IMR-90 (cell line): ENCODE measurements at regions of chr4 and their contacts with region 1.

Region 1: GRCh38 chr4:124322234-124323065 is 390.1 kb downstream of the ANKRD50 start:
- DNase-seq: peak; percentile 49
- ATAC-seq: peak; percentile 71
- H3K4me3 ChIP-seq: no peak overlapping the region
- H3K27ac ChIP-seq: no peak overlapping the region
- H3K4me1 ChIP-seq: no peaks in the 10 kb centered on the region
- H3K27me3 ChIP-seq: no peaks in the 10 kb centered on the region
- CTCF ChIP-seq: peak; percentile 61
- POLR2A ChIP-seq: no peak
- RAD21 ChIP-seq: peak; percentile 63

Region 2: DNA sequence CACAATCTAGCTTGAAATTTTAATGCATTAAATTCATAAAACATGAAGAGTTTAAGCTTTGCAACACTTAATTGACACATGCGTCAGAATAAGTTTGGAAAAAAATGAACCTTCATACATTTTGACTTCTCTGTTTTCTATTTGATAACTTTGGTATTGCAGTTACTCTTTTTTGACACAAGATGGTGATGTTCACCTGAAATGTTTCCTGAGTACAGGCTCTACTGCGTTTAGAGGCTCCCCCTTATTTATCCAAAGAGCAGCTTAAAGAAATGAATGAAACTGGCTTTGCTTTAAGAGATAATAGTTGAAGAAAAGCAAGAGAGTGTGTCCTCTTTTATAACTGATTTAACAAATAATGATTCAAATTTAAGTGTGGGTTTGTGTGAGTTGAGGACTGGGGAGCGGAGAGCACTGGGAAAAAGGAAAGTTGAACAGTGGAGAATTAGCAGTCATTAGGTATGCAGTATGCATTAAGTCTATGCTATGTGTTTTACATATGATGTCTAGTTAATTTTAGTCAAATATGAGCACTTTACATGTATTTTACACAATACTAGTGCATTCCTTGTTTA is 1219.5 kb before region 1 on chr4:
- CTCF ChIA-PET with region 1: interaction called, 3 read pairs
- POLR2A ChIA-PET with region 1: no interaction called
- dilution Hi-C with region 1: no loop called
- in situ Hi-C with region 1: no loop called
- intact Hi-C with region 1: loop called (anchors 1 kb)
- DNase-seq: peak; percentile 69
- ATAC-seq: peak; percentile 89
- H3K4me3 ChIP-seq: no peak overlapping the region
- H3K27ac ChIP-seq: no peak overlapping the region
- H3K4me1 ChIP-seq: no peaks in the 10 kb centered on the region
- H3K27me3 ChIP-seq: no peaks in the 10 kb centered on the region
- CTCF ChIP-seq: peak; percentile 71
- POLR2A ChIP-seq: no peak
- RAD21 ChIP-seq: peak; percentile 81

Region 3: GRCh38 chr4:125244848-125245450 is 922.5 kb after region 1 on chr4:
- CTCF ChIA-PET with region 1: no interaction called
- POLR2A ChIA-PET with region 1: no interaction called
- dilution Hi-C with region 1: no loop called
- in situ Hi-C with region 1: loop called (anchors 10 kb)
- intact Hi-C with region 1: no loop called
- DNase-seq: peak; percentile 47
- ATAC-seq: peak; percentile 56; the same call in 1 of the 2 replicates
- H3K4me3 ChIP-seq: no peak overlapping the region
- H3K27ac ChIP-seq: no peak overlapping the region
- H3K4me1 ChIP-seq: peaks cover 3% of the 10 kb centered on the region
- H3K27me3 ChIP-seq: no peaks in the 10 kb centered on the region
- CTCF ChIP-seq: peak; percentile 54
- POLR2A ChIP-seq: no peak
- RAD21 ChIP-seq: peak; percentile 57